Activated CD8-positive, alpha-beta T cell treated with anti-CD3 and anti-CD28 coated beads for 36 hours (primary cell): ENCODE measurements at regions of chr18 and their contacts with region 1.

Region 1: DNA sequence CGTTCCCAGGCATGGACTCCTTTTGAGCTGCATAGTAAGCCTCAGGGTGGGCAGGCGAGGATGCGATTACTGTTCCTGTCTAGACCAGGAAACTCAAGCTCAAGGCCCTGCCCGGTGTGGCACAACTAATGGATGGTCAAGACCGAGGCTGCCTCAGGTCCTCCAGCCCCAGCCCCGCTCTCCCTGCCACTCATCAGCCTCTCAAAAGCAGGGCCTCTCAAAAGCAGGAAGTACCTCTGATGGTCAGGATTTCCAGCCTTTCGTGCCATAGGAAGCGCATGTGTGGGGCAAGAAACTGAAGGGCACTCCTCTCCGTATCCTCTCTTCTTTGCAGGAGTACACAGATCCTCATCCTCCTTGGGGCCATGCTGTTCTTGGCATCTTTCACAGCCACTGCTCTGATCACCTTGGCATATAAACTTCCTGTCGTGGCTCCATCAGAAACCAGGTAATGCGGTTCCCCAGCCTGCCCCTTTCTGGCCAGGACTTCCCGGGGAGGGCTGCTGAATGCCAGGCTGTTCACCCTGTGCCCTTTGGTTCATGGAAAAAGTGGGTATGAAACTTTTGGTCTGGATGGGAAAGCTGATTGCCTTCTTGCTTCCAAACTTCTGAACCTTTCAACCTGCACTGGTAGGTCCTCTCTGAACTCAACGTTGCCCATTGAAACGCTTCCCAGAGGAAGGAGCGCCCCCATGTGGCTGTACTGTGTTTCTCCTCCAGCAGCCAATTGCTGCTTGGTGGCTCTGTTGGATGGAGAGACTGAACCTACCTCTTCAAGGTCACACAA is 82.8 kb upstream of the SEC11C start:
- DNase-seq: peak; percentile 76
- ATAC-seq: peak; percentile 67
- H3K4me3 Mint-ChIP-seq: no peak overlapping the region
- H3K27ac Mint-ChIP-seq: no peak overlapping the region
- H3K4me1 Mint-ChIP-seq: no peaks in the 10 kb centered on the region
- H3K27me3 Mint-ChIP-seq: peaks cover 13% of the 10 kb centered on the region
- CTCF ChIP-seq: peak; percentile 83

Region 2: DNA sequence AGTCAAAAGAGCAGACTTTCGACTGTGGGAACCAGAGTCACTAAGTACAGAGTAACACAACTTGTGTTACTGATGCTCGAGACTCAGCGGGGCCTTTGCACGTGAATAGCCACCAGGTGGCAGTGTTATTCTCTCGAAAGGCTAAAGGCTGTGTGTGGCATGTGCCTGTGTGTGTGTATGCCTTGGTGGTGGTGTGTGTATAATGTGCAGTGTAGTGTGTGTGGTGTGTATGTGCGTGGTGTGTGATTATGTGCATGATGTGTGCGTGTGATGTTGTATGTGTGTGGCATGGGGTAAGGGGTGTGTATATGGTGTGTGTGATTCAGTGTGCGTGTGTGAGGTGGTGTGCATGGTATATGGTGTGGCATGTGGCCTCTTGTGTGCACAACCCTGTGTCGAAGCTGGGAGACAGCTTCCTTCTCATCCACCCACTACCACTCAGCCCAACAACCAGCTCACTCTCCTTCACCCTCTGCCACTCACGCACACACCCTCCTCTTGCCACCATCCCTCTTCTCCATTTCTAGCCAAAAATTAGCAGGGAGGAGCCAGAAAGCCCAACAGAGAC is 275.2 kb before region 1 on chr18:
- CTCF ChIA-PET with region 1: interaction called, 5 read pairs
- POLR2A ChIA-PET with region 1: no interaction called
- intact Hi-C with region 1: loop called (anchors 1 kb)
- DNase-seq: peak; percentile 81
- ATAC-seq: peak; percentile 90
- H3K4me3 Mint-ChIP-seq: no peak overlapping the region
- H3K27ac Mint-ChIP-seq: no peak overlapping the region
- H3K4me1 Mint-ChIP-seq: no peaks in the 10 kb centered on the region
- H3K27me3 Mint-ChIP-seq: peaks cover 11% of the 10 kb centered on the region
- CTCF ChIP-seq: peak; percentile 82